ENCODE measurements at regions of chr20 and their contacts with region 1.

Region 1: GRCh38 chr20:45436732-45437391 is 20.9 kb downstream of the PIGT start:
- DNase-seq: peak; percentile 92
- ATAC-seq: peak; percentile 98
- H3K4me3 Mint-ChIP-seq: peak overlapping the region; percentile 83
- H3K27ac Mint-ChIP-seq: peak overlapping the region; percentile 54
- H3K4me1 Mint-ChIP-seq: peaks cover 18% of the 10 kb centered on the region
- H3K27me3 Mint-ChIP-seq: no peaks in the 10 kb centered on the region

Region 2: GRCh38 chr20:45320948-45321595 is 115.8 kb before region 1 on chr20:
- POLR2A ChIA-PET with region 1: interaction called, 11 read pairs
- DNase-seq: no peak
- ATAC-seq: peak; percentile 43
- H3K4me3 Mint-ChIP-seq: peak overlapping the region; percentile 69
- H3K27ac Mint-ChIP-seq: peak overlapping the region; percentile 84
- H3K4me1 Mint-ChIP-seq: peaks cover 34% of the 10 kb centered on the region
- H3K27me3 Mint-ChIP-seq: peaks cover 6% of the 10 kb centered on the region

Region 3: DNA sequence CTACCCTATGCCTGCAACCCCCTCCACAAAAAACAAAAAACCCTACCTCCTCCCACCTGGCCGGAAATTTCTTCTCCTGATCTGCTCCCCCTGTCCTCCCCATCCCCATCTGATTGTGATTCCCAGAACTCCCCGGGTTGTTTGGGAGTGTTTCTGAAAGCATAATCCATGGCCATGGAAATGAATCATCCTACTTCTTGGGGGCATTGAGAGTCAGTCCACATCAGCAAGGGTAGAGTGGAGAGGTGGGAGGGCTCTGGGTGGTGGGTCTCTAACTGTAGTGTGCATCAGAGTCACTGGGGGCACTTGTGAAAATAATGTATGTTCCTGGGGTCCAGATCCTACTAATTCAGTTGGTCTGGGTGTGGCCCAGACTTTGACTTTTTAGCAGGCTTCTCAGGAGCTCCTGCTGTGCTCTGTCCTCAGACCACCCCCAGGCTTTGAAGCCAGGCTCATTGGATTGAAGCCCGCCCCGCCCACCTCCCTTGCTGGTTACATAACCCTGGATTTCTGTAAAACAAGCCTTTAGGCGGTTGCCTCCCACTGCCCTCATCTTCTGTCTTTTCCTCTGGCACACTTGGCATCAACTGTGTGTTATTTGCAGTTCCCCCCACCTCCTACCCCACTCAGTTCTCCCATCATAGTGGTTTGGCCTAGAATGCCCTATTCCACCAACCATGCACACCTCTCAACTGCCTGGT is 10.4 kb before region 1 on chr20:
- POLR2A ChIA-PET with region 1: no interaction called
- DNase-seq: no peak
- ATAC-seq: no peak
- H3K4me3 Mint-ChIP-seq: no peak overlapping the region
- H3K27ac Mint-ChIP-seq: no peak overlapping the region
- H3K4me1 Mint-ChIP-seq: peaks cover 2% of the 10 kb centered on the region
- H3K27me3 Mint-ChIP-seq: no peaks in the 10 kb centered on the region